ENCODE measurements at regions of chr2 and their contacts with region 1.

Region 1: DNA sequence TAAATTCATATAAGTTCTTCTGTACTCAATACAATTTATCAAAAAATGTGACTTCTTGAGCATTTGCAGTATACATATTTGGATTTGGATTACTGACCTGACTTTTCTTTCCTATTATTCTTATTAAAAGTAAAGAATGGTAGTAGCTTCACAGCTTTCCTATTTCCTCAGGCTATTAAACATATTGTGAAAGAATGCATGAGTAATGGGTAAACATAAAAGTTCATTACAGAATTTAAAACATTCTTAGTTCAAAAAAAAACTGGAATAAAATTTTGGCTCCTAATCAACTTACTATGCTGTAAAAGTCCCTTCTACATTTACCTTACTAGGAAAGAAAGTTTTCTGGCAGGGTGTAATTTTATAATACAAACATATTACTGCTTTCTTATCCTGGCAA is 27.3 kb upstream of the C2orf66 start:
- DNase-seq: no peak
- H3K4me3 ChIP-seq: no peak overlapping the region
- H3K4me3 Mint-ChIP-seq: no peak overlapping the region
- H3K27ac Mint-ChIP-seq: no peak overlapping the region
- H3K4me1 ChIP-seq: no peaks in the 10 kb centered on the region
- H3K4me1 Mint-ChIP-seq: no peaks in the 10 kb centered on the region
- H3K27me3 ChIP-seq: no peaks in the 10 kb centered on the region
- H3K27me3 Mint-ChIP-seq: no peaks in the 10 kb centered on the region
- CTCF ChIP-seq: no peak

Region 2: DNA sequence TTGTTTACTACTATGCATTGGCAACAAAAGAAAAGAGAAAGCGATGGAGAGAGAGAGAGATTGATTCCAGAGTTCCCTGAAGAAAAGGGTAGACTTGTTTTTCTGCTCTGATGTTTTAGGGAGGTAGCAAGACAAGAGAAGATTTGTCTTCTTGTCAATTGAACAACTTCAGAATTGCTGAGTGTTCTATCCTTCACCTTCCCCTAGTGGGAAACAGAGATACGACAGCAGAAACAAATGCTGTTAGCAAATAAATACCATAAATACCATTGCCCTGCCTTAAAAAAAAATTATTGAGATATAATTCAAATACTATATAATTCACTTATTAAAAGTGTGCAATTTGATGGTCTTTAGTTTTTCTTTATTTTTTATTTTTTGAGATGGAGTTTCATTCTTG is 223.1 kb before region 1 on chr2:
- CTCF ChIA-PET with region 1: no interaction called
- POLR2A ChIA-PET with region 1: no interaction called
- intact Hi-C with region 1: no loop called
- DNase-seq: no peak
- H3K4me3 ChIP-seq: no peak overlapping the region
- H3K4me3 Mint-ChIP-seq: no peak overlapping the region
- H3K27ac Mint-ChIP-seq: no peak overlapping the region
- H3K4me1 ChIP-seq: no peaks in the 10 kb centered on the region
- H3K4me1 Mint-ChIP-seq: no peaks in the 10 kb centered on the region
- H3K27me3 ChIP-seq: no peaks in the 10 kb centered on the region
- H3K27me3 Mint-ChIP-seq: no peaks in the 10 kb centered on the region
- CTCF ChIP-seq: no peak

Region 3: DNA sequence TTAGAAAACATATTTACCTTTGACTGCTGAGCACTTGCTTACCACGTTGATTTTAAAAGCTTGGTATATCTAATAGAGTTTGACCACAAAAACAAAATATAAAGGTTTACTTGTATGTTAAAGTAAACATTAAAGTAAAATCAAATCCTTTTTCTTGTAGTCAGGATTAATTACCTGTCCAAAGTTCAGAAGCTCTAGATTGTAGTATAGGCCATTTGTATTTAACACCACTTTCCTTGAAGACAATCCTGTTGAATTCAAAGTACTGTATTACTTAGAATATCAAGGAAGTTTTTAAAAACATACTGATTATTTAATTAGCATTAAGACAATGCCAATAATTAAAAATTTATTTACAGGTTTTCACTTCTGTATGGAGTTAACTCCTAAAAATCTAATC is 37.1 kb after region 1 on chr2:
- CTCF ChIA-PET with region 1: no interaction called
- POLR2A ChIA-PET with region 1: no interaction called
- intact Hi-C with region 1: loop called (anchors 2 kb)
- DNase-seq: no peak
- H3K4me3 ChIP-seq: no peak overlapping the region
- H3K4me3 Mint-ChIP-seq: no peak overlapping the region
- H3K27ac Mint-ChIP-seq: no peak overlapping the region
- H3K4me1 ChIP-seq: no peaks in the 10 kb centered on the region
- H3K4me1 Mint-ChIP-seq: no peaks in the 10 kb centered on the region
- H3K27me3 ChIP-seq: no peaks in the 10 kb centered on the region
- H3K27me3 Mint-ChIP-seq: no peaks in the 10 kb centered on the region
- CTCF ChIP-seq: no peak

Measured in Caco-2 (cell line).